Astrocyte of the cerebellum (primary cell): ENCODE measurements at regions of chr9 and their contacts with region 1.

Region 1: GRCh38 chr9:22829236-22829635 is 382.6 kb downstream of the DMRTA1 start:
- DNase-seq: no peak
- H3K4me3 ChIP-seq: no peak overlapping the region
- CTCF ChIP-seq: no peak

Region 2: GRCh38 chr9:22922222-22922621 is 93.0 kb after region 1 on chr9:
- in situ Hi-C with region 1: loop called (anchors 25 kb)
- DNase-seq: no peak
- H3K4me3 ChIP-seq: no peak overlapping the region
- CTCF ChIP-seq: no peak